Activated B cell treated with CpG ODN at 0.5 μM for 24 hours (primary cell): ENCODE measurements at regions of chr9 and their contacts with region 1.

Region 1: DNA sequence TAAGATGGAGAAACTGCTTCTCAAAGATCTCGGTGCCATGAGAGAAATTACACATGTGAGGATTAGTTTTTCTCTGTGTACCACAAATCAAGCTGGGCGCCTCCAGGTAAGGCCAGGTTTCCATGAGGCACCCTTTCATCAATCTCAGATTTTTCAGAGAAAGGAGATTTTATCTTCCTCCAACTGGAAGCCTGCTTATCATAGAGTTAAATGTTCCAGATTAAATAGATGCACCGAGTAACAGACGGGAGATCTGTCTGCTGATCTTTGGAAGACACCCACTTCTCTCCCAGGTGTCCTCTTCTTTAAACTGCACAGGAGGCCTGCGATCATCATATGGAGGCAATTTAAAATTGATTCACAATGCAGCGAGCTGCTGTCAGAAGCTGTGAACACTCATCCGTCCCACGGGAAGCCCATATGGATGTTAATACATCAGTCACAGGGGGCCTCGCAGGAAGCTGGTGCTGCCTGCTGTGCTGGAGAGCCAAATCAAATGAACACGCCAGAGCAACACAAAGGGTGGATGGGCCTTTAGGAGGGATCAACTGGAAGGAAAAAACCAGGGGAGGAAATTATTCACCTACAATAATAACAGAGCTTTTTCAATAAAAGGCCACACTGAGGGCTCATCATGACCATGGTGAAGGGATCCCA is 93.3 kb downstream of the TLE1 start:
- DNase-seq: no peak
- ATAC-seq: no peak
- H3K4me3 Mint-ChIP-seq: no peak overlapping the region
- H3K27ac Mint-ChIP-seq: peak overlapping the region; percentile 22
- H3K4me1 Mint-ChIP-seq: peaks cover 75% of the 10 kb centered on the region
- H3K27me3 Mint-ChIP-seq: no peaks in the 10 kb centered on the region
- CTCF ChIP-seq: no peak

Region 2: GRCh38 chr9:81529556-81530195 is 66.3 kb before region 1 on chr9:
- CTCF ChIA-PET with region 1: no interaction called
- POLR2A ChIA-PET with region 1: no interaction called
- intact Hi-C with region 1: loop called (anchors 5 kb)
- DNase-seq: no peak
- ATAC-seq: no peak
- H3K4me3 Mint-ChIP-seq: peak overlapping the region; percentile 25
- H3K27ac Mint-ChIP-seq: peak overlapping the region; percentile 69
- H3K4me1 Mint-ChIP-seq: peaks cover 18% of the 10 kb centered on the region
- H3K27me3 Mint-ChIP-seq: peaks cover 7% of the 10 kb centered on the region
- CTCF ChIP-seq: no peak

Region 3: DNA sequence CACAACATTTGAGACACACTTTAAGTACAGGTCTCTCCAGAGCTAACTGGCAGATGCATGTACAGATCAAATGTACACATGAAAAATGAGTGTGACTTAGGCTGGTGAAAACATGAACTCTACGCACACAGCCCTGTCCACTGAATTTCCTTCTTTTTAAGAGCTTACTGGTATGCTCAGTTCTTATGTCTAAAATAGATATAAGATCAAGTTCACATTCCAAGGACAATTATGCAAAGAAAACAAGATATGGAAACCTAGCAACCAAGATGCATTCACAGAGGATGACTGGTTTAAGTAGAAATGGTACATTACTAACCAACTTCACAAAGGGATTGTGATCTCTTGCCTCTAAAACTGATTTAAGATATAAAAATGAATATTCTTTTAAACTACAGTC is 36.6 kb after region 1 on chr9:
- CTCF ChIA-PET with region 1: no interaction called
- POLR2A ChIA-PET with region 1: no interaction called
- intact Hi-C with region 1: loop called (anchors 5 kb)
- DNase-seq: no peak
- ATAC-seq: no peak
- H3K4me3 Mint-ChIP-seq: no peak overlapping the region
- H3K27ac Mint-ChIP-seq: no peak overlapping the region
- H3K4me1 Mint-ChIP-seq: peaks cover 34% of the 10 kb centered on the region
- H3K27me3 Mint-ChIP-seq: no peaks in the 10 kb centered on the region
- CTCF ChIP-seq: no peak

Region 4: DNA sequence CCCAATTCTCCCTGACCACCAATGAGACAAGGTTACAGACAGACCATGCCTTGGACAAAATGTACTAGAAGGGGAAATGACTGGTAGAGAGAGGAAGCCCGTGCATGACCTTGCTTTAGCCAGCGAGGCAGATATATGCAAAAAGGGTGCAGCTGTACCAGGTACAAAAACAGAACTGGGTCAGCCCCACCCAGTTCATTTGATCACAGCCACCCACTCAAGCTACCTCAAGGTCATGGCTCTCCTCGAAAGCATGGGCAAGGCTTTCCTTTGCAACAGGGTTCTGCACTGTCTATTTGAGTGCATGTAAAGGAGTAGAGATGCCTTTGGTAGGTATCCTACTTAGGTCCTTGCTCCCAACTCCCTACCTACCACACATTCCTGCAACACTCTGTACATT is 60.0 kb after region 1 on chr9:
- CTCF ChIA-PET with region 1: no interaction called
- POLR2A ChIA-PET with region 1: interaction called, 4 read pairs
- intact Hi-C with region 1: loop called (anchors 2 kb)
- DNase-seq: peak; percentile 42
- ATAC-seq: peak; percentile 89
- H3K4me3 Mint-ChIP-seq: peak overlapping the region; percentile 78
- H3K27ac Mint-ChIP-seq: peak overlapping the region; percentile 97
- H3K4me1 Mint-ChIP-seq: peaks cover 84% of the 10 kb centered on the region
- H3K27me3 Mint-ChIP-seq: no peaks in the 10 kb centered on the region
- CTCF ChIP-seq: no peak

Region 5: GRCh38 chr9:81729135-81729534 is 133.1 kb after region 1 on chr9:
- CTCF ChIA-PET with region 1: no interaction called
- POLR2A ChIA-PET with region 1: no interaction called
- intact Hi-C with region 1: loop called (anchors 5 kb)
- DNase-seq: no peak
- ATAC-seq: peak; percentile 72
- H3K4me3 Mint-ChIP-seq: peak overlapping the region; percentile 76
- H3K27ac Mint-ChIP-seq: peak overlapping the region; percentile 76
- H3K4me1 Mint-ChIP-seq: peaks cover 23% of the 10 kb centered on the region
- H3K27me3 Mint-ChIP-seq: no peaks in the 10 kb centered on the region
- CTCF ChIP-seq: no peak

Region 6: GRCh38 chr9:82606492-82607382 is 1010.7 kb after region 1 on chr9:
- CTCF ChIA-PET with region 1: no interaction called
- POLR2A ChIA-PET with region 1: no interaction called
- intact Hi-C with region 1: loop called (anchors 5 kb)
- DNase-seq: no peak
- ATAC-seq: peak; percentile 45
- H3K4me3 Mint-ChIP-seq: no peak overlapping the region
- H3K27ac Mint-ChIP-seq: no peak overlapping the region
- H3K4me1 Mint-ChIP-seq: no peaks in the 10 kb centered on the region
- H3K27me3 Mint-ChIP-seq: no peaks in the 10 kb centered on the region
- CTCF ChIP-seq: peak; percentile 75